PC-9 (cell line): ENCODE measurements at regions of chr4 and their contacts with region 1.

Region 1: GRCh38 chr4:10116580-10117358 is at the start of gene WDR1:
- DNase-seq: peak; percentile 82 to 95
- H3K4me3 ChIP-seq: peak within 1 kb of the TSS; percentile 81
- H3K27ac ChIP-seq: peak within 1 kb of the TSS; percentile 61
- H3K4me1 ChIP-seq: peaks cover 10% of the 10 kb centered on the region
- H3K27me3 ChIP-seq: no peaks in the 10 kb centered on the region
- CTCF ChIP-seq: no peak
- total RNA-seq, gene WDR1: 251 and 258 TPM in 2 replicates

Region 2: DNA sequence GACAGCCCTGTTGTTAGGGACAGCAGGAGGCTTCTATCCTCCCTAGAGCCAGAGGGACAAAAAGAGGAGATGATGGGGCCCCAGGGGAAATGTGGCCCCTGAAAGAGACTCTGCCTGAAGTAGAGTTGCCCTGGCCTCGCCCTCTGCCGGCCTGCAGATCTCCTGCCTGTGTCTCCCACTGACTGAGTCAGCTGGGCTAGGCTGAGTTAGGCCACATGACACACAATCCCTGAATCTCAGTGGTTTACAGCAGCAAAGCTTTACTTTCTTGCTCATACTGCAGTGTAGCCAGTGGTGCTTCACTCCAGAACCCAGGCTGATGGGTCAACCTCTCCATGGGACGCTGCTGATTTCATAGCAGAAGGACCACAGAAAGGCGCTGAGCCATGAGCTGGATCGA is 311.9 kb before region 1 on chr4:
- CTCF ChIA-PET with region 1: no interaction called
- POLR2A ChIA-PET with region 1: interaction called, 17 read pairs
- intact Hi-C with region 1: no loop called
- DNase-seq: no peak
- H3K4me3 ChIP-seq: no peak overlapping the region
- H3K27ac ChIP-seq: no peak overlapping the region
- H3K4me1 ChIP-seq: no peaks in the 10 kb centered on the region
- H3K27me3 ChIP-seq: peaks cover 21% of the 10 kb centered on the region
- CTCF ChIP-seq: no peak

Region 3: GRCh38 chr4:10033191-10033881 is 83.4 kb before region 1 on chr4:
- CTCF ChIA-PET with region 1: no interaction called
- POLR2A ChIA-PET with region 1: interaction called, 4 read pairs
- intact Hi-C with region 1: loop called (anchors 2 kb)
- DNase-seq: peak; percentile 16 to 63
- H3K4me3 ChIP-seq: no peak overlapping the region; the same call in 1 of the 2 replicates
- H3K27ac ChIP-seq: peak overlapping the region; percentile 85
- H3K4me1 ChIP-seq: peaks cover 36% of the 10 kb centered on the region
- H3K27me3 ChIP-seq: no peaks in the 10 kb centered on the region
- CTCF ChIP-seq: no peak

Region 4: DNA sequence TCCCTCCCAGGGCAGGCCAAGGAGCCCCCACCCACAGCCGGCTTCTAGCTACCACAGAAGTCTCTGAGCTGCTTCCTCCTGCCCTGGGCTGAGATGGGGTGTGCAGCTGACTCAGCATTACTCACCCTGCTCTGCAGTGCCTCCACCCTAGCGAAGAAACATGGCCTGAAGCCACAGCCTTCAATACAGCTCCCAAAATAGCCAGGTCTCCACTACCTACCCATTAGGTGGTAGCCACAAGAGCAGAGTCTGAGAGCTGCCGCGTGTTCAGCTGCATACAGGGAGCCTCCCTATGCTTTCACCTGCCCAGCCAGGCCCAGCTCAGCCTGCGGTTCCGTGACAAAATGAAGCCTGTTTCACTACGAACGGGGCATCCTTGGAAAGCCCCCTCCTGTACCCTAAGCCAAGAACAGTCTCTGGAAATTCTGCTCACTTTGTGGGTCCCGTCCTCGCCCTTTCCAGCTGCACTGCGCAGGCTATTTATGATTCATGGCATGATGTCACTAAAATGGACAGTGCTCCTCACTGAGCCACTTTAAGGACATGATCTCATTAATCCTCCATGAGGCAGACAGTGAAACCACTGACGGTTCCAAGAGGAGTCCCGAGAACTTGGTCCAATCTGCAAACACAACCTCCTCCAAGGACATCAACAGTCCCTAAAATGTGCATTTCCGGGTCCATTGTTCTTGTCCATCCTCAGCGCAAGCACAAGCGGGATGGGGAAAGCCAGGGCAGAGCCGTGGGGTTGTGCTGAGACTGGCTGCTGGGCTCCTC is 20.4 kb before region 1 on chr4:
- CTCF ChIA-PET with region 1: no interaction called
- POLR2A ChIA-PET with region 1: interaction called, 13 read pairs
- intact Hi-C with region 1: no loop called
- DNase-seq: peak; percentile 81 to 90
- H3K4me3 ChIP-seq: no peak overlapping the region
- H3K27ac ChIP-seq: peak overlapping the region; percentile 71
- H3K4me1 ChIP-seq: peaks cover 39% of the 10 kb centered on the region
- H3K27me3 ChIP-seq: no peaks in the 10 kb centered on the region
- CTCF ChIP-seq: no peak

Region 5: GRCh38 chr4:10106421-10107039 is 10.2 kb before region 1 on chr4:
- CTCF ChIA-PET with region 1: no interaction called
- POLR2A ChIA-PET with region 1: interaction called, 9 read pairs
- intact Hi-C with region 1: loop called (anchors 1 kb)
- DNase-seq: peak; percentile 76 to 93
- H3K4me3 ChIP-seq: peak overlapping the region; percentile 24; the same call in 1 of the 2 replicates
- H3K27ac ChIP-seq: peak overlapping the region; percentile 67
- H3K4me1 ChIP-seq: peaks cover 26% of the 10 kb centered on the region
- H3K27me3 ChIP-seq: no peaks in the 10 kb centered on the region
- CTCF ChIP-seq: no peak